ENCODE measurements at regions of chr2 and their contacts with region 1.

Region 1: GRCh38 chr2:161954103-161954502 is 119.9 kb downstream of the DPP4 start:
- DNase-seq: no peak
- ATAC-seq: peak; percentile 15
- H3K4me3 Mint-ChIP-seq: no peak overlapping the region
- H3K27ac Mint-ChIP-seq: peak overlapping the region; percentile 89
- H3K4me1 Mint-ChIP-seq: peaks cover 54% of the 10 kb centered on the region
- H3K27me3 Mint-ChIP-seq: no peaks in the 10 kb centered on the region

Region 2: GRCh38 chr2:161238560-161239325 is 715.4 kb before region 1 on chr2:
- CTCF ChIA-PET with region 1: no interaction called
- POLR2A ChIA-PET with region 1: no interaction called
- intact Hi-C with region 1: loop called in 1 of 2 experiments (anchors 5 kb)
- DNase-seq: peak; percentile 79
- ATAC-seq: peak; percentile 55
- H3K4me3 Mint-ChIP-seq: peak overlapping the region; percentile 76
- H3K27ac Mint-ChIP-seq: peak overlapping the region; percentile 81
- H3K4me1 Mint-ChIP-seq: peaks cover 54% of the 10 kb centered on the region
- H3K27me3 Mint-ChIP-seq: no peaks in the 10 kb centered on the region

Region 3: DNA sequence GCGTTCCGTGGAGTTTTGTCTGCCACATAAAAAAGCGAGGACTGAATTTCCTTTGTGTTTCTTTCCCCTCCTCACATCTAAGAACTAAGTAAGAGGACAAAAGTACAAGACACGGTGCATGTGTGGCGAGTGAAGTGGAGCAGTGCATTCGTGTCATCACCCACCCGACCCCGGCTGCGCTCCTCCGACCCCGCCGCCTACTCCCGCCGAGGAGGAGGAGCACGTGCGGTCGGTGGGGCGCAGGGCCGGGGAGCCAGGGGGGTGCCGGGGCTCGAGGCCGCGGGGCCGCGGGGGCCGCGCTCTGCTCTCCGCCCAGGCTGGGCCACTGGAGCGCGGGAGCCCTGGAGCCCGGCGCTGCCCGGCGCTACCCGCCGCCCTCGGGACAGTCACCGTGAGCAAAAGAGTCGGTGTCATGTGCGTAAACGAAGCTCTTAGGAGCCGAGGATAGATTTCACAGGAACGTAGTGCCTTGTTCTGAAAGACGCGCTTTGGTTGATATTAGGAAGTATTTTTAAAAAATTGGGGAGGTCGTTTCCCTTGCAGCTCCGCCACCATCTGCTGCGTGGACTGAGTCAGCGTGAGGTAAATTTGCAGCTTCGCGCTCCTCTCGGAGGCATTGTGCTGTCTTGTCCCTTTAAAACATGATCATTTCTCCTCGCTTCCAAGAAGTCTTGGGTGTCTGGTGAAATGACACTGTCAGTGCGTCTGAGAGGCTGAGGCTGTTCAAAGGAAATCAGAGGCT is 527.0 kb before region 1 on chr2:
- CTCF ChIA-PET with region 1: no interaction called
- POLR2A ChIA-PET with region 1: no interaction called
- intact Hi-C with region 1: loop called (anchors 5 to 10 kb)
- DNase-seq: peak; percentile 51
- ATAC-seq: peak; percentile 30
- H3K4me3 Mint-ChIP-seq: peak overlapping the region; percentile 51
- H3K27ac Mint-ChIP-seq: peak overlapping the region; percentile 67
- H3K4me1 Mint-ChIP-seq: peaks cover 21% of the 10 kb centered on the region
- H3K27me3 Mint-ChIP-seq: peaks cover 72% of the 10 kb centered on the region

Region 4: GRCh38 chr2:161992526-161992925 is 38.4 kb after region 1 on chr2:
- CTCF ChIA-PET with region 1: interaction called, 5 read pairs
- POLR2A ChIA-PET with region 1: no interaction called
- intact Hi-C with region 1: loop called (anchors 1 kb)
- DNase-seq: peak; percentile 72
- ATAC-seq: peak; percentile 87
- H3K4me3 Mint-ChIP-seq: peak overlapping the region; percentile 69
- H3K27ac Mint-ChIP-seq: peak overlapping the region; percentile 92
- H3K4me1 Mint-ChIP-seq: peaks cover 60% of the 10 kb centered on the region
- H3K27me3 Mint-ChIP-seq: no peaks in the 10 kb centered on the region

Region 5: DNA sequence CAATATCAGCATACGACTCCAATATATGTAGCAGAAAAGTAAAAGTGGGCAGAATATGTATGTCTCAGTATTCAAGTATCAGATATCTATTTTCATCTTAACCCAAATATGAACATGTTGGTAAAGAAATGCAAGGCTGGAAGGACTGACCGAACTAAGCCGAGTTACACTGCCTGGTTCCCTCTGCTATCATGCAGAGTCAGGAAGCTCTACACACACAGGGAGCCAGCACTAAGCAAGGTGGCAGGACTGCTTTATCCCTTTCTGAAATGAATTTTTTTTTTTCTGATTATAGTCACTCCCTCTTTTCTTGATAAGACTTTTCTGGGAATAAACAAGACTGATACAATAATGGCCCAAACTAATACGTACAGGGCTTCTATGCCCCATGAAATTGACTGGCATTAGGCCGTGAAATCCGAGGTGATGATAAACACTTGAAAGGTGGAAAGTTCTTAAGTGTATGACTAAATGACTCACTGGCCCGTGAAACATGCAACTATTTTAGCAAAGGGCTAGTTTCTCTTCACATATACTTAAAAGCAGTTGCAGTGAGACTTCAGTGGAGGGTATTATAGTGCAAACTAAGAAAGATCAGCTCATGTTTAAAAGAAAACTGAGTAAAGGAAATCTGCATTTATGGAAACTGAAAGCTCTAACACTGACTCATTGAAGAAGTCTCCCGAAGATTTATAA is 105.0 kb after region 1 on chr2:
- CTCF ChIA-PET with region 1: interaction called, 3 read pairs
- POLR2A ChIA-PET with region 1: no interaction called
- intact Hi-C with region 1: loop called (anchors 1 to 2 kb)
- DNase-seq: peak; percentile 54
- ATAC-seq: peak; percentile 78
- H3K4me3 Mint-ChIP-seq: peak overlapping the region; percentile 52
- H3K27ac Mint-ChIP-seq: peak overlapping the region; percentile 85
- H3K4me1 Mint-ChIP-seq: peaks cover 86% of the 10 kb centered on the region
- H3K27me3 Mint-ChIP-seq: no peaks in the 10 kb centered on the region

Region 6: GRCh38 chr2:162123806-162124758 is 170.0 kb after region 1 on chr2:
- CTCF ChIA-PET with region 1: interaction called, 4 read pairs
- POLR2A ChIA-PET with region 1: no interaction called
- intact Hi-C with region 1: loop called in 1 of 2 experiments (anchors 2 kb)
- DNase-seq: no peak
- ATAC-seq: no peak
- H3K4me3 Mint-ChIP-seq: no peak overlapping the region
- H3K27ac Mint-ChIP-seq: no peak overlapping the region
- H3K4me1 Mint-ChIP-seq: peaks cover 15% of the 10 kb centered on the region
- H3K27me3 Mint-ChIP-seq: no peaks in the 10 kb centered on the region

Measured in activated CD4-positive, alpha-beta T cell treated with anti-CD3 and anti-CD28 coated beads for 36 hours (primary cell).